Activated naive CD4-positive, alpha-beta T cell treated with anti-CD3 and anti-CD28 coated beads for 36 hours (primary cell): ENCODE measurements at regions of chr1 and their contacts with region 1.

Region 1: GRCh38 chr1:235295902-235296376 is 32.0 kb downstream of the ARID4B start:
- DNase-seq: no peak
- H3K4me3 Mint-ChIP-seq: no peak overlapping the region
- H3K27ac Mint-ChIP-seq: no peak overlapping the region
- H3K4me1 Mint-ChIP-seq: peaks cover 59% of the 10 kb centered on the region
- H3K27me3 Mint-ChIP-seq: no peaks in the 10 kb centered on the region

Region 2: DNA sequence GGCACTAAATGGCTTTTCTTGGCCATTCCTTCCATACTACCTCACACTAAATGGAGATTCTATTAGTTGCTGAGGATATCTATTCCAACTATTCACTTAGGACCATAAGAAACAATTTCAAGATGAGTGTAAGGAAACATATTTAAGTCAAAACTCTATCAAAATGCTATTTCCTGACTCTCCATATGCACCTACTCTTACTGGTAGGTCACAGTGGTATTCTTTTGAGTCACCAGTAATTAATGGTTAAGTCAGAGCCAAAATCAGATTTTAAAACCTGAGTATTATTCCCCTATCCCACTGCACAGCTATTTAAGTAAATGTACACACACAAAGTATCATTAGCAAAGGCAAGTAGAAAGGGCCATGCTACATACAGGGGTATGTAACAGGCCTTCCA is 18.2 kb before region 1 on chr1:
- CTCF ChIA-PET with region 1: no interaction called
- intact Hi-C with region 1: loop called (anchors 2 kb)
- DNase-seq: no peak
- H3K4me3 Mint-ChIP-seq: no peak overlapping the region
- H3K27ac Mint-ChIP-seq: peak overlapping the region; percentile 55
- H3K4me1 Mint-ChIP-seq: peaks cover 69% of the 10 kb centered on the region
- H3K27me3 Mint-ChIP-seq: no peaks in the 10 kb centered on the region

Region 3: DNA sequence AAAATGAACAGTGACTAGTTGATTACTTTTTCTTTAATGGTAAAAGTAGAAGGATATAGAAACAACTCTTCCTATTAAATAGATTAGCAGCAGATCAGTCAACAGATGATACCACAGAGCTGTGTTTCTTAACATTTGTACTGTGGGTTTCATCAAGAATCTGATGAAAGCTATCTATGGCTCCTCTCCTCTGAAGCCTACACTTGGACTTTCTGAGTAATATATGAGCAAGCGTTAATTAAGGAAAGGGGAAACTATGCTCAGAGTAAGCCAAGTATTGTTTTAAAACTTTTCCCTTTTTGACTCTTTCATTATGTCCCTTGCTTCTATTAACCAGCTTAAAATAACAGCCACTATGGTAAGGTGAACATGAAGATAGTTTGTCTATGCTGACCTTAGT is 21.2 kb after region 1 on chr1:
- CTCF ChIA-PET with region 1: interaction called, 7 read pairs
- intact Hi-C with region 1: loop called (anchors 2 kb)
- DNase-seq: no peak
- H3K4me3 Mint-ChIP-seq: no peak overlapping the region
- H3K27ac Mint-ChIP-seq: peak overlapping the region; percentile 60
- H3K4me1 Mint-ChIP-seq: peaks cover 75% of the 10 kb centered on the region
- H3K27me3 Mint-ChIP-seq: no peaks in the 10 kb centered on the region